ENCODE measurements at regions of chr7 and their contacts with region 1.

Region 1: DNA sequence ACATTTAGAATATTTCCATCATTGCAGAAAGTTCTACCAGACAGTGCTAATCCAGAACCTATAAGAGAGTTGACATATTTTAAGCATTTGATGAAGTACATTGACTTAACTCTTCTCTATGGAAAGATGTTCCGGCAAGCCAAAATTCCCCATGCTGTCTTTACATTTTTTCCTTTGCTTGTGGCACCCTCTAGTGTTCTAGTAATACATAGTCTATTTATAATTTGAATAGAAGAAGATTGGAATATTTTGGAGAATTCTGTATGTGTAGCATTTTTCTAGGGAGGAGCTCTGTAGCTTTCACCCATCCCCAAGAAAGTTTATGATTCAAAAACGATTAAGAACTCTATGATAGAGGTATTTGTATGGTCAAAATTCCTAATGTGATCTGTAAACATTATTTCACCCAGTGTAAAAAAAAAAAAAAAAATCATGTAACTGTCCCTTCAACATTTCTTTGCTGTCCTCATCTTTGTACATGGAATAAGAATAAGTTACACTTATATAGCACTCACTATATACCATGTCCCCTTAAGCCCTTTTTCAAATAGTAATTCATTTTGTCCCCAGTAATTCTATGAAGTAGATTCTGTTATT is 33.2 kb downstream of the NRF1 start:
- DNase-seq: peak; percentile 52 to 71 (median 63)
- H3K4me3 ChIP-seq: no peak overlapping the region
- H3K27ac ChIP-seq: no peak overlapping the region
- H3K4me1 ChIP-seq: peaks cover 0 to 7% (median 0%) of the 10 kb centered on the region in 4 experiments
- H3K27me3 ChIP-seq: no peaks in the 10 kb centered on the region

Region 2: DNA sequence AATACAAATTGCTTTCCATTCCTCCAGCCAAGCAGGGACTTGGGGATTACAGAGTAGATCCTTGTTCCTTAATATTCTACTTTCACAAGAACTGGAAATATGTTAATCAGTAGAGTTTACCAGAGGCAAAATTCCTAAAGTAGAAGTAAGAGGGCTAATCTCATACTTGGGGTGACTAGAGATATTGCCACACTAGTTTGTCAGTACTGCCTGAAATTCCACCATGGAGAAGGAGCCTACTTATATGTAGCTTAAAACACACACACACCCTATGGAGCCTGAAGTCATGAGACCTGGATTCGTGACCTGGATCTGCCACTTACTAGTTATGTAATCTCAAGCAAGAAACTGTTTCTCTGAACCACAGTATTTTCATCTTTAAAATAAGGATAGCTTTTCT is 176.6 kb before region 1 on chr7:
- CTCF ChIA-PET with region 1: interaction called, 11 read pairs
- POLR2A ChIA-PET with region 1: no interaction called
- DNase-seq: no peak
- H3K4me3 ChIP-seq: no peak overlapping the region
- H3K27ac ChIP-seq: no peak overlapping the region
- H3K4me1 ChIP-seq: no peaks in the 10 kb centered on the region
- H3K27me3 ChIP-seq: no peaks in the 10 kb centered on the region

Region 3: DNA sequence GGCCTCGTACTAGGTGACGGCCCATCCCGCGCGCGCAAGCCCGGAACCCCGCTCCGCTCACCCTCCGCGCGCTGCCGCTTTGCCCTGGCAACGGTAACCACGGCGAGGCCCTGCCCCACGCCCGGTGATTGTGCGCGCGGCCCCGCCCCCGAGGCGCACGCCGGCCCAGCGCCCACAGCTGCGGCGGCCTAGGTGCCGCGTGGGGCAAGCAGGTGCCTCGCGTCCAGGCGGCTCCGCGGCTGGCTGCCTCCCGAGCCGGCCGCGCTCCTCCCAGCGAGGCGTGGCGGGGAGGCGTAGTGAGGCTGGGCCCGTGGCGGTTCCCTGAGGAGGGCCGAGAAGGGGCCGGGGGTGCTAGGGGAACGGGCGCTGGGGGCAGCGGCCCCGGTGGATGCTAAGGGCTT is 142.4 kb before region 1 on chr7 and contains the start of gene SMKR1:
- CTCF ChIA-PET with region 1: no interaction called
- POLR2A ChIA-PET with region 1: no interaction called
- DNase-seq: peak; percentile 86 to 95 (median 95)
- H3K4me3 ChIP-seq: peak within 1 kb of the TSS; percentile 56 to 85 (median 68)
- H3K27ac ChIP-seq: no peak within 1 kb of the TSS
- H3K4me1 ChIP-seq: peaks cover 0 to 16% (median 11%) of the 10 kb centered on the region in 4 experiments
- H3K27me3 ChIP-seq: peaks cover 0 to 2% (median 0%) of the 10 kb centered on the region in 5 experiments

Region 4: GRCh38 chr7:129617652-129618051 is 27.1 kb before region 1 on chr7:
- CTCF ChIA-PET with region 1: interaction called, 40 read pairs
- POLR2A ChIA-PET with region 1: no interaction called
- DNase-seq: peak in 1 of 3 donors; percentile 26
- H3K4me3 ChIP-seq: peak overlapping the region in 2 of 7 experiments; percentile 49 to 52
- H3K27ac ChIP-seq: peak overlapping the region in 1 of 2 experiments; percentile 12
- H3K4me1 ChIP-seq: peaks cover 34 to 54% (median 39%) of the 10 kb centered on the region in 4 experiments
- H3K27me3 ChIP-seq: no peaks in the 10 kb centered on the region

Measured in common myeloid progenitor, CD34-positive (primary cell).